CD4-positive, alpha-beta T cell (primary cell): ENCODE measurements at regions of chr1 and their contacts with region 1.

Region 1: GRCh38 chr1:200302192-200302920 is 107.5 kb downstream of the ZNF281 start:
- DNase-seq: peak; percentile 41 to 86 (median 63)
- ATAC-seq: peak; percentile 96
- H3K4me3 ChIP-seq: peak overlapping the region; percentile 69
- H3K4me3 Mint-ChIP-seq: peak overlapping the region; percentile 97
- H3K27ac ChIP-seq: peak overlapping the region; percentile 52 to 54
- H3K27ac Mint-ChIP-seq: peak overlapping the region; percentile 92
- H3K4me1 ChIP-seq: peaks cover 16% of the 10 kb centered on the region
- H3K4me1 Mint-ChIP-seq: peaks cover 30% of the 10 kb centered on the region
- H3K27me3 ChIP-seq: no peaks in the 10 kb centered on the region
- H3K27me3 Mint-ChIP-seq: no peaks in the 10 kb centered on the region
- CTCF ChIP-seq: no peak

Region 2: DNA sequence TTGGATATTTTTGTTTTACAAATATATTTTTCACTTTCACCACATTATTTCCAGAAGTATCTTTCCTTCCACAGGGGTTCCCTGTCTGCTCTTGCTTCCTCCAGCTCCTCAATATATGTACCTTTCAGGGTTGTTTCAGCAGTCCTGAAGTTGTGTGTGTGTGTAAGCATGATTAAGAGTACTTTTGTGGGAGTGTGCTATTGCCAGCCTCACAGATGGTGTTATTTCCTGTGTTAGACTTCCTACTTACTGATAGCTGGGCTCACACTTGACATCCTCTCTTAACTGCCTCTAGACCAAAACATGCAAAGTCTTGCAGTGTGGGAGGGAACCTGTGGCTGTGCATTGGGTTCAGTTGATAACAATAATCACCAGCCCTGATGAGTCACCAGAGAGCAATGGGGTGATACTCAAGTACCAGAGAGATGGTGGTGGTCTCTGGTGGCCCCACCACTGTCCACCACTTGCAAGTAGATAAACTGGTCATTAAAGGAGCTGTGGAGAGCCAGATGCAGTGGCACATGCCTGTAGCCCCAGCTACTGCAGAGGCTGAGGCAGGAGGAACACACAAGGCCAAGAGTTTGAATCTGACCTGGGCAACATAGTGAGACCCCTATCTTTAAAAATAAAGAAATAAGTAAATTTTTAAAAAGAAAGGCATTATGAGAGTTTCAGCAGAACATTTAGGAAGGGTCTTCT is 148.1 kb before region 1 on chr1:
- CTCF ChIA-PET with region 1: no interaction called
- POLR2A ChIA-PET with region 1: interaction called, 18 read pairs
- intact Hi-C with region 1: no loop called
- DNase-seq: peak in 13 of 14 experiments; percentile 12 to 83 (median 38)
- ATAC-seq: peak; percentile 80
- H3K4me3 ChIP-seq: no peak overlapping the region
- H3K4me3 Mint-ChIP-seq: peak overlapping the region; percentile 75
- H3K27ac ChIP-seq: peak overlapping the region; percentile 32 to 50
- H3K27ac Mint-ChIP-seq: peak overlapping the region; percentile 84
- H3K4me1 ChIP-seq: peaks cover 20% of the 10 kb centered on the region
- H3K4me1 Mint-ChIP-seq: peaks cover 29% of the 10 kb centered on the region
- H3K27me3 ChIP-seq: no peaks in the 10 kb centered on the region
- H3K27me3 Mint-ChIP-seq: no peaks in the 10 kb centered on the region
- CTCF ChIP-seq: no peak